Tibial artery (tissue), 4 donors: ENCODE measurements at regions of chrX and their contacts with region 1.

Region 1: GRCh38 chrX:39730662-39731397 is 366.9 kb downstream of the BCOR start:
- DNase-seq: peak; percentile 71 to 92
- H3K4me3 ChIP-seq: no peak overlapping the region
- H3K27ac ChIP-seq: peak overlapping the region; percentile 57 to 72
- H3K4me1 ChIP-seq: peaks cover 0 to 56% (median 20%) of the 10 kb centered on the region in 4 donors
- H3K27me3 ChIP-seq: no peaks in the 10 kb centered on the region
- CTCF ChIP-seq: peak; percentile 38 to 51

Region 2: DNA sequence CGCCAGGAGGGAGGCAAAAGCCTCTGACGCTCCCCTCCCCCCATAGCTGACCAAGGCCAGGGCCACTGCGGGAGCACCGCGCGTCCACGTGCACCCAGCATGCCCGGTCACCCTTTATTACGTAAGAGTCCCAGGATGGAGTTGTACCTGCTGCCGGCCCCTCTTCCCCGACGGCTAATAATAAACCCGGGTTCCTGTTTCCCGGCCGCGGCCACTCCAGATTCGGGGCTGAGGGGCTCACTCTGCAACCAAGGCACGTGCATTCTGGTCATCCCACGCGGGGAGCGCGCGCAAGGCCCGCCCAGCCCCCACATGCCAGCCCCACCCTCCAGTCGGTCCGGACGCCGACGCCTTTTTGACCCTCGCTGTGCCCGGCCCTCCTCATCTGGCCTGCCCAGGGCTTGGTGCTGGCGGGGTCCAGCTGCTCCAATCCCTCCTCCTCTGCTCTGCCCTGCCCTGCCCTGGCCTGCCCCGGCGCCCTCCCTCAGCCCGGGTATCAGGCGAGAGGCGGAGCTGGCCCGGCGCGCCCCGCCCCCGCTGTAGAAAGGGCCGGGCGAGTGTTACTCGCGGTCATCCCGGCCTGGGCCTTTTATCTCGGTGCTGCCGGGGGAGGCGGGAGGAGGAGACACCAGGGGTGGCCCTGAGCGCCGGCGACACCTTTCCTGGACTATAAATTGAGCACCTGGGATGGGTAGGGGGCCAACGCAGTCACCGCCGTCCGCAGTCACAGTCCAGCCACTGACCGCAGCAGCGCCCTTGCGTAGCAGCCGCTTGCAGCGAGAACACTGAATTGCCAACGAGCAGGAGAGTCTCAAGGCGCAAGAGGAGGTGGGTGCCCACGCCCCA is 927.0 kb before region 1 on chrX:
- intact Hi-C with region 1: loop called (anchors 5 kb)
- DNase-seq: peak; percentile 83 to 91
- H3K4me3 ChIP-seq: peak overlapping the region; percentile 70 to 81
- H3K27ac ChIP-seq: peak overlapping the region; percentile 92 to 96
- H3K4me1 ChIP-seq: peaks cover 0 to 42% (median 0%) of the 10 kb centered on the region in 4 donors
- H3K27me3 ChIP-seq: no peaks in the 10 kb centered on the region
- CTCF ChIP-seq: no peak

Region 3: DNA sequence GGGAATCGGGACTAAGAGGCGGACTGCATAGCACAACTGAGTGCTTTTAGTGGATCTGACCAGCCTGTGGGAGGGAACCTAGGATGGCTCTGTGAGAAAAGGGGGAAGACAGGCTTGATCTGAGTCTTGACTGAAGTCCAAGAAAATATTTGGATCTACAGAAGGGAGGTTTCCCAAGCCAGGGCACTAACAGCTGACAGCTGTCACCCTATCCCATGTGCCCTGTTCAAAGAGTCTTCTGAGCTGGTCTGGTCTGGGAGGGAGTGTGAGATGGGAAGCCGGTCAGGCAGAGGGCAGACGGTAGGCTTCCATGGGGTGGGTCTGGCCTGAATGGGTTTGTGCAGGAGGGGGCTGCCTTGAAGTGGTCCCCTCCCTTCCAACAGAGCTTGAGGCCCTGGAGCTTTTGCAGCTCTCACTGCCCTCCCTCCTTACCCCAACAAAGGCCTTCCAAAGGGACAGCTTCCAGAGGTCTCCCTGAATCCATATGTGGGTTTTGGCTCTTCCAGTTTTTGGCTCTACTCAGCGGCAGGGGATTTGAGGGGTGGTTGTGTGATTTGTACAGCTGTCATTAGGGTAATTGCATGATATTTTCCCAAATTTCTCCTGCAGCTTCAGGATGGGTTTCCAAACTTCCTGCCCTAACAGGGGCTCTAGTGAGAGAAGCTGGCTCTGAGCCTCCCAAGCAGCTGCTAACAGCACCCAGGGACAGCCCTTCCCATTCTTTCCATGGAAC is 276.8 kb before region 1 on chrX:
- intact Hi-C with region 1: no loop called
- DNase-seq: no peak
- H3K4me3 ChIP-seq: no peak overlapping the region
- H3K27ac ChIP-seq: no peak overlapping the region
- H3K4me1 ChIP-seq: no peaks in the 10 kb centered on the region
- H3K27me3 ChIP-seq: no peaks in the 10 kb centered on the region
- CTCF ChIP-seq: no peak

Region 4: GRCh38 chrX:39705299-39705698 is 25.5 kb before region 1 on chrX:
- intact Hi-C with region 1: no loop called
- DNase-seq: peak; percentile 66 to 90
- H3K4me3 ChIP-seq: no peak overlapping the region
- H3K27ac ChIP-seq: no peak overlapping the region
- H3K4me1 ChIP-seq: peaks cover 0 to 4% (median 0%) of the 10 kb centered on the region in 4 donors
- H3K27me3 ChIP-seq: no peaks in the 10 kb centered on the region
- CTCF ChIP-seq: peak; percentile 45 to 59

Region 5: GRCh38 chrX:40013266-40014195 is 282.7 kb after region 1 on chrX:
- intact Hi-C with region 1: loop called (anchors 10 kb)
- DNase-seq: peak; percentile 62 to 86
- H3K4me3 ChIP-seq: peak overlapping the region; percentile 62 to 66
- H3K27ac ChIP-seq: peak overlapping the region; percentile 94 to 96
- H3K4me1 ChIP-seq: peaks cover 0 to 49% (median 13%) of the 10 kb centered on the region in 4 donors
- H3K27me3 ChIP-seq: no peaks in the 10 kb centered on the region
- CTCF ChIP-seq: no peak

Region 6: DNA sequence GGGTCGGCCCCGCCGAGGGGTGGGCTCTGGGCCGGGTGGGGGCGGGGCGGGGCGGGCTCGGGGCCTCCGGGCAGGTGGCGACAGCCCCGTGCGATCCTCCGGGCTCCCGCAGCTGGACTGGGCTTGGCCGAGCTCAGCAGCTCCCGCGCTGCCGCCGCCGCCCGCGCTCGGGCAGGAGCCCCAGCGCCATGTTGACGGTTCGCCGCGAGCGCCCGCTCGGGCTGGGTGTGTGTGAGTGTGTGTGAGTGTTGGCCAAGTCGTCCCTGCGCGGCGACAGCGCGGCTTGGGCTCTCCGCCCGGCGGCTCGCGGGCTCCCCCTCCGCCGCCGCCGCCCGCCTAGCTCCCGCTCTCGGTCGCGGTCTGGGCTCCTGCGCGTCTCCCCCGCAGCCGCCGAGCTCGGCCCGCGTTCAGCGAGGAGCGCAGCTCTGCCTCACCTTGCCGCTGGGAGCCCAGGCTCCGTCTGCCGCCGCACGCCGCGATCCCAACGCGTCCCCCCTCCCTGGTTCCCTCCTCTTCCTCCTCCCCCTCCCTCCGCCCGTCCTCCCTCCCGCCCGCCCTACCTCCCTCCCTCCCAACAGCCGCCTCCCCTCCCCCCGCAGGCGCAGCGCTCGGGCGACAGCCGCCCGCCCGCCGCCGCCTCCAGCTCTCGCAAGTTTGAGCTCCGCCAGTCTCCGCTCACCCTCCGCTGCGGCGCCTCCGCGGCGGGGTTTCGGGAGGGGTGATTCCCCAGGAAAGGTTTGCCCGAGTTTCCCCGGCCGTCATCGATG is 366.9 kb after region 1 on chrX and contains the start of gene BCOR:
- intact Hi-C with region 1: loop called (anchors 5 kb)
- DNase-seq: peak in 1 of 2 donors; percentile 88
- H3K4me3 ChIP-seq: peak within 1 kb of the TSS; percentile 86 to 95
- H3K27ac ChIP-seq: peak within 1 kb of the TSS; percentile 93 to 97
- H3K4me1 ChIP-seq: peaks cover 0 to 61% (median 14%) of the 10 kb centered on the region in 4 donors
- H3K27me3 ChIP-seq: no peaks in the 10 kb centered on the region
- CTCF ChIP-seq: peak in 1 of 2 experiments; percentile 5

Region 7: GRCh38 chrX:40153335-40154249 is 422.8 kb after region 1 on chrX:
- intact Hi-C with region 1: loop called (anchors 5 kb)
- DNase-seq: peak in 1 of 2 donors; percentile 73
- H3K4me3 ChIP-seq: peak overlapping the region; percentile 53 to 59
- H3K27ac ChIP-seq: peak overlapping the region; percentile 67 to 73
- H3K4me1 ChIP-seq: peaks cover 0 to 43% (median 18%) of the 10 kb centered on the region in 4 donors
- H3K27me3 ChIP-seq: no peaks in the 10 kb centered on the region
- CTCF ChIP-seq: no peak

Region 8: DNA sequence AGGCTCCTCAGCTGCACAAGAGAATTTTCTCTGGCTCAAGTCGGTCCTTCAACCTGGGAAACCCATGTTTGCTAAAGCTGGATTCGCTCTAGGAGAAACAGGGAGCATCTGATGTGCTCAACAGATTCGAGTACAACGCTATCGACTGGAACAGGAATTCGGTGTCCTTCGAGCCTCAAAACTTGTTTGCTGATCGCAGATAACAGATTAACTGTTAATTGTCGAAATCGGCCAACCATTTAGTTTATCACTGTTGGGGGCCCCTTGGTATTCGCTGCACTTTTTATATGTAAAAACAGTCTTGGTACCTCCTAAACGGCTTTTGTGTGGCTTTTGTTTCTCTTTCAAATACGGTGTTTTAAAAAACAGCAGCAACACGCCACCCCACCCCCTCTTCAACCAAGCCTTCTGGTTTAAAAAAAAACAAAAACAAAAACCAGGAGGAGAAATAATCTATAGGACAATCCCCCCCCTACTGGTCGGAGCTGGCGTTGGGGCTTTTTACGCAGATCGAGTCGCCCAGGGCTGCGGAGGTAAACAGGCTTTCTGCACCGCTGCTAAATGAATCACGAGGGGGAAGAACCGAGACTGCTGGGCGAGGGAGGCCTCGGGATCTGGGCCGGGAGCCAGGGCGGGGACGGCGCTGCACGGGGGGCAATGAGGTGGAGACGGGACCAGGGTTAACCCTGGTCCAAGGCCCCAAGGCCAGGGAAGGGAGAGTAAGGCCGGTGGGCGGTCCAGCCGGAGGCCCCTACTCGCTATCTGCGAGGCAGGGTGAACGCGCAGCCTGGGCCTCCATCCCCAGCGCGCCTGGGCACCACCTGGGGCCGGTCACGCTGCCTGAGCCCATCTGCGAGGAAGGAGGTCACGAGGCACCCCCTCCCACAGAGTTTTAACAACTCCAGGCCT is 438.6 kb after region 1 on chrX:
- intact Hi-C with region 1: loop called (anchors 5 kb)
- DNase-seq: peak in 1 of 2 donors; percentile 70
- H3K4me3 ChIP-seq: no peak overlapping the region
- H3K27ac ChIP-seq: no peak overlapping the region
- H3K4me1 ChIP-seq: peaks cover 0 to 54% (median 19%) of the 10 kb centered on the region in 4 donors
- H3K27me3 ChIP-seq: no peaks in the 10 kb centered on the region
- CTCF ChIP-seq: no peak

Region 9: DNA sequence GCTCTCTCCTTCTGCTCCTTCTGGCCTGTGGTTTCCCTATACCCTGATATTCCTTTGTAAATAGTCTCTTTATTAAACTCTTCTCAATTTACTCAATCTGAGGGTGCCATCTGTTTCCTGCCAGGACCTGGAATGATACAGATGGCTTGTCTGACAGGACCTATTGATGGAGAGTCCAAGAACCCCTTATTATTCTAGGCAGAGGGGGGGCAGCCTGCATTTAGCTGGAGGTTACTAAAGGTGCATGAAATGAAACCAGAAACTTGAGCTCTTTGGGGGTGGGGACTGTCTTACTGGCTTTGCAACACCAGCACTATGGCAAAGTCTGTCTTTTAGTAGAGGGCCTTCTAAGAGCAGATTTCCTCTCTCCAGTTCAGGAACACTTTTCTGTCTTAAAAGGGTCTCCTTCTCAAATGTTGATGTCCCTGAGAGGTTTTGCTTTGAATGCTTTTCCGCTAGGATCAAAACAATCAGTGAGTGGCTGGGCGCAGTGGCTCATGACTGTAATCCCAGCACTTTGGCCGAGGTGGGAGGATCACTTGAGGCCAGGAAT is 1167.0 kb after region 1 on chrX:
- intact Hi-C with region 1: no loop called
- DNase-seq: no peak
- H3K4me3 ChIP-seq: no peak overlapping the region
- H3K27ac ChIP-seq: no peak overlapping the region
- H3K4me1 ChIP-seq: no peaks in the 10 kb centered on the region
- H3K27me3 ChIP-seq: no peaks in the 10 kb centered on the region
- CTCF ChIP-seq: no peak